Common myeloid progenitor, CD34-positive (primary cell): ENCODE measurements at regions of chr7 and their contacts with region 1.

Region 1: GRCh38 chr7:29921404-29922010 is 68.1 kb downstream of the SCRN1 start:
- DNase-seq: peak; percentile 73 to 80 (median 75)
- H3K4me3 ChIP-seq: no peak overlapping the region
- H3K27ac ChIP-seq: no peak overlapping the region
- H3K4me1 ChIP-seq: no peaks in the 10 kb centered on the region
- H3K27me3 ChIP-seq: no peaks in the 10 kb centered on the region

Region 2: DNA sequence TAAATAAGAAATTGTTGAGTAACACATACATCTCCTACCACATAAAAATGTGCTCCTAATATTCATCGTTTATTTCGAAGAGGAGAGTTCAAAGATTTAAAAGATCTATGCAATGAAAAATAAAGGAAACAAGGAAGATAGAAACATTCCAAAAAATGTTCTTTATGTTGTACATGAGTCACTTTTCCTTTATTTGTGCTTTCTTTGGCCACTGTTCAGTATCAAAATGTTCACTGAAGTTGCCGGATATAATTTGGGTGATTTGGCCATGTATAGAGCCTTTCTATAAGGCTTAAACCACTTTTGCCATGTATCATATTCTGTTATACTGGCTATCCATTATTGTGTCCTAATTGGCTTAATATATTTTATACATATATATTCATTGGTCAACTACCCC is 420.8 kb before region 1 on chr7:
- CTCF ChIA-PET with region 1: no interaction called
- POLR2A ChIA-PET with region 1: no interaction called
- DNase-seq: no peak
- H3K4me3 ChIP-seq: no peak overlapping the region
- H3K27ac ChIP-seq: no peak overlapping the region
- H3K4me1 ChIP-seq: peaks cover 0 to 3% (median 0%) of the 10 kb centered on the region in 4 experiments
- H3K27me3 ChIP-seq: no peaks in the 10 kb centered on the region

Region 3: DNA sequence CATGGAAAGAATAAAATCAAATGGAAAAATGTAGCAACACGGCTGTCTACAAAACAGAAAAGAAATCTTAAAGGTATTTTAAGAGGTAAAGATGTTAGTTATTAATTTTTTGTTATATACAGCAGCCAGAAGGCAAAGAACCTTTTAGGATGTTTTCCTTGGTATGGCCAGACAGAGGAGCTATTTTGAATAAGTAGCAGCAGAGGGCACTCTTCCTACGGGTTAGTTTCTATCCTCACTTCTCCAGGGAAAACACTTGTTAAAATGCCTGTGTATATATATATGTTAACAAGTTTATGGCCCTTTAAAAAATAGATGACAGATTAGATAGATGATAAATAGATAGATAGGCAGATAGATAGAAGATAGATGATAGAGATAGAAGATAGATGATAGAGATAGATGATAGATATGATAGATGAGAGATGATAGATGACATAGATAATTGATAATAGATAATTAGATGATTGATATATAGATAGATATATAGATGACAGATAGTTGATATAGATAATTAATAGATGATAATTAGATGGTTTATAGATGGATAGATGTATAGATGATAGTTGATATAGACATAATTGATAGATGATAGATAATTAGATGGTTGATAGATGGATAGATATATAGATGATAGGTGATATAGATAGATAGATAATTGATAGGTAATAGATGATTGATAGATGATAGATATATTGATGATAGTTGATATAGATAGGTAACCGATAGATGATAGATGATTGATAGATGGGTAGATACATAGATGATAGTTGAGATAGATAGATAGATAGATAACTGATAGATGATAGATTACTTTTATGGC is 173.0 kb before region 1 on chr7:
- CTCF ChIA-PET with region 1: interaction called, 33 read pairs
- POLR2A ChIA-PET with region 1: no interaction called
- DNase-seq: peak; percentile 38 to 72 (median 71)
- H3K4me3 ChIP-seq: no peak overlapping the region
- H3K27ac ChIP-seq: no peak overlapping the region
- H3K4me1 ChIP-seq: peaks cover 0 to 2% (median 0%) of the 10 kb centered on the region in 4 experiments
- H3K27me3 ChIP-seq: no peaks in the 10 kb centered on the region

Region 4: DNA sequence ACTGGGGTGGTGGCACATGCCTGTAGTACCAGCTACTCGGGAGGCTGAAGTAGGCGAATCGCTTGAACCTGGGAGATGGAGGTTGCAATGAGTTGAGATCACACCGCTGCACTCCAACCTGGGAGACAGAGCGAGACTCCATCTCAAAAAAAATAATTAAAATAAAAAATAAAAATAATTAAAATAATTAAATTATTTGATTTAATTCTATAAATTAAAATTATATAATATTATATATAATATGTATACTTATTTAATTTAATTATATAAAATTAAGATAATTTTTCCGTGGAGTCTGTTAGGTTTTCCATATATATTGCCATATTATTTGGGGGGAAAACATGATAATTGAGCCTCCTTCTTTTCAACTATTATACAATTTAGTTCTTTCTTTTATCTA is 103.2 kb before region 1 on chr7:
- CTCF ChIA-PET with region 1: no interaction called
- POLR2A ChIA-PET with region 1: no interaction called
- DNase-seq: no peak
- H3K4me3 ChIP-seq: no peak overlapping the region
- H3K27ac ChIP-seq: no peak overlapping the region
- H3K4me1 ChIP-seq: peaks cover 0 to under 1% (median under 1%) of the 10 kb centered on the region in 4 experiments
- H3K27me3 ChIP-seq: peaks cover 0 to 2% (median 0%) of the 10 kb centered on the region in 5 experiments

Region 5: GRCh38 chr7:29878081-29878688 is 43.3 kb before region 1 on chr7:
- CTCF ChIA-PET with region 1: interaction called, 119 read pairs
- POLR2A ChIA-PET with region 1: interaction called, 3 read pairs
- DNase-seq: peak; percentile 62 to 79 (median 74)
- H3K4me3 ChIP-seq: peak overlapping the region in 1 of 7 experiments; percentile 1
- H3K27ac ChIP-seq: no peak overlapping the region
- H3K4me1 ChIP-seq: peaks cover 0 to 5% (median 4%) of the 10 kb centered on the region in 4 experiments
- H3K27me3 ChIP-seq: peaks cover 0 to 1% (median 0%) of the 10 kb centered on the region in 5 experiments

Region 6: DNA sequence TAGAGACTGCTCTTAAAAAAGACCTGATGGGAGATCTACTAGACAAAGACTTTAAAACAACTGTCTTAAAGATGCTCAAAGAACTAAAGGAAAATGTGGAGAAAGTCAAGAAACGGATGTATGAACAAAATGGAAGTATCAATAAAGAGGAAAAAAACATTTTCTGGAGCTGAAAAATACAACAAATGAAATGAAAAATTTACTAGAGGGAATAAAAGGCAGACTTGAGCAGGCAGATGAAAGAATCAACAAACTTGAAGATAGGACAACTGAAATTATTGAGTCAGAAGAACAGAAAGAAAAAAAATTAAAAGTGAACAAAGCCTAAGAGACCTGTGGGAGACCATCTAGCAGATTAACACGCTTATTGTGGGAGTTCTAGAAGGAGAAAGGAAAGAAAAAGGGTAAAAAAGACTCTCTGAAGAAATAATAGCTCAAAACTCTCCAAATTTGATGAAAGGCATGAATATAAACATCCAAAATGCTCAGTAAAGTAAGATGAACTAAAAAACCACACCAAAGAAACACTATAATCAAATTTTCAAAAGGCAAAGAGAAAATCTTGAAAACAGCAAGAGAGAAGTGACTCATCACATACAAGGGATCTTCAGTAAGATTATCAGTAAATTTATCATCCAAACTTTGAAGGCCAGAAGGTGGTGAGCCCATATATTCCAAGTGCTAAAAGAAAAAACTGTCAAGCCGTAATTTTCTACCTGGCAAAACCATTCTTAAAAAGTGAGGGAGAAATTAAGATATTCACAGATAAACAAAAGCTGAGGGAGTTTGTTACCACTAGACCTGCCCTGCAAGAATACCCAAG is 15.1 kb before region 1 on chr7:
- CTCF ChIA-PET with region 1: interaction called, 27 read pairs
- POLR2A ChIA-PET with region 1: no interaction called
- DNase-seq: no peak
- H3K4me3 ChIP-seq: no peak overlapping the region
- H3K27ac ChIP-seq: no peak overlapping the region
- H3K4me1 ChIP-seq: no peaks in the 10 kb centered on the region
- H3K27me3 ChIP-seq: no peaks in the 10 kb centered on the region

Region 7: GRCh38 chr7:29935111-29935510 is 13.6 kb after region 1 on chr7:
- CTCF ChIA-PET with region 1: interaction called, 40 read pairs
- POLR2A ChIA-PET with region 1: no interaction called
- DNase-seq: no peak
- H3K4me3 ChIP-seq: no peak overlapping the region
- H3K27ac ChIP-seq: no peak overlapping the region
- H3K4me1 ChIP-seq: no peaks in the 10 kb centered on the region
- H3K27me3 ChIP-seq: no peaks in the 10 kb centered on the region

Region 8: GRCh38 chr7:29976673-29977415 is 55.3 kb after region 1 on chr7:
- CTCF ChIA-PET with region 1: no interaction called
- POLR2A ChIA-PET with region 1: no interaction called
- DNase-seq: peak in 1 of 3 donors; percentile 14
- H3K4me3 ChIP-seq: no peak overlapping the region
- H3K27ac ChIP-seq: no peak overlapping the region
- H3K4me1 ChIP-seq: peaks cover 0 to 19% (median 5%) of the 10 kb centered on the region in 4 experiments
- H3K27me3 ChIP-seq: no peaks in the 10 kb centered on the region

Region 9: GRCh38 chr7:30511973-30512662 is 590.6 kb after region 1 on chr7:
- CTCF ChIA-PET with region 1: no interaction called
- POLR2A ChIA-PET with region 1: no interaction called
- DNase-seq: no peak
- H3K4me3 ChIP-seq: no peak overlapping the region
- H3K27ac ChIP-seq: no peak overlapping the region
- H3K4me1 ChIP-seq: no peaks in the 10 kb centered on the region
- H3K27me3 ChIP-seq: no peaks in the 10 kb centered on the region